Activated CD4-positive, alpha-beta T cell treated with anti-CD3 and anti-CD28 coated beads for 36 hours (primary cell): ENCODE measurements at regions of chr1 and their contacts with region 1.

Region 1: GRCh38 chr1:35564037-35564883 is 6.7 kb downstream of the NCDN start:
- DNase-seq: peak; percentile 91
- ATAC-seq: peak; percentile 87
- H3K4me3 Mint-ChIP-seq: no peak overlapping the region
- H3K27ac Mint-ChIP-seq: no peak overlapping the region
- H3K4me1 Mint-ChIP-seq: peaks cover 28% of the 10 kb centered on the region
- H3K27me3 Mint-ChIP-seq: no peaks in the 10 kb centered on the region

Region 2: DNA sequence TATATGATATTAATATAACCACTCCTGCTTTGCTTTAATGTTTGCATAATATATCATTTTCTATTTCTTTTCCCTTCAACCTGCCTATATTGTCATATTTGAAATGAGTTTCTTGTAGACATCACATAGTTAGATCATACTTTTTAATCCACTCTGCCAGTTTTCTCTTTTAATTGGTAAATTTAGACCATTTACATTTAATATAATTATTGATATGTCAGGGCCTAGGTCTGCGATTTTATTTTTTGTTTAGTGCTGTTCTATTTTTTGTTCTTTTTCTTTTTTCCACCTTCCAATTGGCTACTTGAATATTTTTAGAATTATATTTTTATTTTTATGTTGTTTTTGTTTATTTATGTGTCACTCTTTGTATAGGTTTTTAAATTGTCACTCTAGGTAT is 1174.3 kb before region 1 on chr1:
- CTCF ChIA-PET with region 1: no interaction called
- POLR2A ChIA-PET with region 1: no interaction called
- intact Hi-C with region 1: no loop called
- DNase-seq: no peak
- ATAC-seq: no peak
- H3K4me3 Mint-ChIP-seq: no peak overlapping the region
- H3K27ac Mint-ChIP-seq: no peak overlapping the region
- H3K4me1 Mint-ChIP-seq: no peaks in the 10 kb centered on the region
- H3K27me3 Mint-ChIP-seq: peaks cover 20% of the 10 kb centered on the region

Region 3: GRCh38 chr1:35180776-35181374 is 383.4 kb before region 1 on chr1:
- CTCF ChIA-PET with region 1: no interaction called
- POLR2A ChIA-PET with region 1: no interaction called
- intact Hi-C with region 1: no loop called
- DNase-seq: peak; percentile 36
- ATAC-seq: peak; percentile 84
- H3K4me3 Mint-ChIP-seq: peak overlapping the region; percentile 7
- H3K27ac Mint-ChIP-seq: peak overlapping the region; percentile 68
- H3K4me1 Mint-ChIP-seq: peaks cover 76% of the 10 kb centered on the region
- H3K27me3 Mint-ChIP-seq: no peaks in the 10 kb centered on the region

Region 4: GRCh38 chr1:35519432-35519831 is 44.8 kb before region 1 on chr1:
- CTCF ChIA-PET with region 1: no interaction called
- POLR2A ChIA-PET with region 1: no interaction called
- intact Hi-C with region 1: no loop called
- DNase-seq: no peak
- ATAC-seq: no peak
- H3K4me3 Mint-ChIP-seq: no peak overlapping the region
- H3K27ac Mint-ChIP-seq: peak overlapping the region; percentile 32
- H3K4me1 Mint-ChIP-seq: peaks cover 32% of the 10 kb centered on the region
- H3K27me3 Mint-ChIP-seq: no peaks in the 10 kb centered on the region

Region 5: GRCh38 chr1:35577071-35577998 is 13.1 kb after region 1 on chr1:
- CTCF ChIA-PET with region 1: interaction called, 10 read pairs
- POLR2A ChIA-PET with region 1: interaction called, 6 read pairs
- intact Hi-C with region 1: no loop called
- DNase-seq: peak; percentile 74
- ATAC-seq: peak; percentile 83
- H3K4me3 Mint-ChIP-seq: peak overlapping the region; percentile 63
- H3K27ac Mint-ChIP-seq: peak overlapping the region; percentile 80
- H3K4me1 Mint-ChIP-seq: peaks cover 20% of the 10 kb centered on the region
- H3K27me3 Mint-ChIP-seq: peaks cover 12% of the 10 kb centered on the region

Region 6: DNA sequence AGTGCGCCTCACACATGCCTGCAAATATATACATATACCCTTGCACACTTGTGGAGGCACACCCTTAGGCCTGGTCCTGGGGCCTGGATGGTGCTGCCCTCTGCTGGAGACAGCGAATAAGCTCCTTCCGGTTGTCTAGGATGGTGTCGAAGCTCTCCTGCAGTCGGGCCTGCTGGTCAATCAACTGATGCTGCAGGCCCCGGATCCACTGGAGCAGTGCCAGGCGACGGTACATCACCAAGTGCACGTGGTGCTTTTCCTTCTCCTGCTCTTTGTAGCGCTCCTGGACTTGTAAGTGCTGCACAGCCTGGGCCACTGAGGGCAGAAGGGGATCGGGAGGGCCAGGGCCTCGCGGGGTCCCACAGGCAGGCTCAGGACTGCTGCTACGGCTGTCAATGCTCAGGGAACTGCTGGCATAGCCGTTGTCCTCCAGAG is 151.3 kb after region 1 on chr1:
- CTCF ChIA-PET with region 1: interaction called, 25 read pairs
- POLR2A ChIA-PET with region 1: interaction called, 3 read pairs
- intact Hi-C with region 1: loop called (anchors 1 to 2 kb)
- DNase-seq: peak; percentile 90
- ATAC-seq: peak; percentile 61
- H3K4me3 Mint-ChIP-seq: peak overlapping the region; percentile 37
- H3K27ac Mint-ChIP-seq: no peak overlapping the region
- H3K4me1 Mint-ChIP-seq: peaks cover 31% of the 10 kb centered on the region
- H3K27me3 Mint-ChIP-seq: no peaks in the 10 kb centered on the region

Region 7: DNA sequence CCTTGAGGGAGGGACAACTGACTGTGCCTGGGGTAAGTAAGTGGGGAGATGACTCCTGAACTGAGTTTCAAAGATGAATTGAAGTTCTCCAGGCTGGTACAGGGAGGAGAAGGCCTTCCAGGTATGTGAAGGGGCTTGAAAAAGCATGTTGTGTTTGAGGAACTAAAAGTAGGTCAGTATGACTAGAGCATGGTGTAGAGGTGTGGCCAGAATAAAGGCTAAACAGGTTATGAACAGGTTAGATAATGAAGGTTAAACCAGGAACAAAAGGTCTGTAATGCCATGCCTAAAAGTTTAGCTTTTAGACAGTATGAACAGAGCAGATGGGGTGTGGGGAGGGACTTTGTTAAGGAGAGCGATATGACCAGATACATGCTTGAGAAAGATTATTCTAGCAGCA is 212.8 kb after region 1 on chr1:
- CTCF ChIA-PET with region 1: interaction called, 12 read pairs
- POLR2A ChIA-PET with region 1: no interaction called
- intact Hi-C with region 1: loop called (anchors 1 kb)
- DNase-seq: no peak
- ATAC-seq: no peak
- H3K4me3 Mint-ChIP-seq: no peak overlapping the region
- H3K27ac Mint-ChIP-seq: no peak overlapping the region
- H3K4me1 Mint-ChIP-seq: no peaks in the 10 kb centered on the region
- H3K27me3 Mint-ChIP-seq: no peaks in the 10 kb centered on the region